ENCODE measurements at regions of chr12 and their contacts with region 1.

Region 1: GRCh38 chr12:15856097-15856982 is 25.8 kb upstream of the STRAP start:
- DNase-seq: peak; percentile 63
- ATAC-seq: peak; percentile 62
- H3K4me3 ChIP-seq: no peak overlapping the region
- H3K27ac ChIP-seq: no peak overlapping the region
- H3K4me1 ChIP-seq: peaks cover 12% of the 10 kb centered on the region
- H3K27me3 ChIP-seq: no peaks in the 10 kb centered on the region
- CTCF ChIP-seq: peak; percentile 76
- EP300 ChIP-seq: no peak
- POLR2A ChIP-seq: no peak
- RAD21 ChIP-seq: peak; percentile 74

Region 2: GRCh38 chr12:15276088-15276698 is 580.1 kb before region 1 on chr12:
- CTCF ChIA-PET with region 1: interaction called, 6 read pairs
- POLR2A ChIA-PET with region 1: no interaction called
- in situ Hi-C with region 1: loop called (anchors 10 kb)
- intact Hi-C with region 1: loop called (anchors 2 kb)
- DNase-seq: peak; percentile 11
- ATAC-seq: peak; percentile 79
- H3K4me3 ChIP-seq: no peak overlapping the region
- H3K27ac ChIP-seq: no peak overlapping the region
- H3K4me1 ChIP-seq: no peaks in the 10 kb centered on the region
- H3K27me3 ChIP-seq: no peaks in the 10 kb centered on the region; a peak in 1 of 5 replicates
- CTCF ChIP-seq: peak; percentile 78
- EP300 ChIP-seq: no peak
- POLR2A ChIP-seq: no peak
- RAD21 ChIP-seq: no peak; the same call in 1 of the 2 replicates

Region 3: GRCh38 chr12:15584366-15585041 is 271.8 kb before region 1 on chr12:
- CTCF ChIA-PET with region 1: interaction called, 84 read pairs
- POLR2A ChIA-PET with region 1: no interaction called
- in situ Hi-C with region 1: loop called (anchors 5 kb)
- intact Hi-C with region 1: no loop called
- DNase-seq: peak; percentile 37
- ATAC-seq: no peak
- H3K4me3 ChIP-seq: no peak overlapping the region
- H3K27ac ChIP-seq: no peak overlapping the region
- H3K4me1 ChIP-seq: peaks cover 18% of the 10 kb centered on the region
- H3K27me3 ChIP-seq: no peaks in the 10 kb centered on the region; a peak in 1 of 5 replicates
- CTCF ChIP-seq: peak; percentile 64
- EP300 ChIP-seq: no peak
- POLR2A ChIP-seq: no peak
- RAD21 ChIP-seq: peak; percentile 24; the same call in 1 of the 2 replicates

Region 4: DNA sequence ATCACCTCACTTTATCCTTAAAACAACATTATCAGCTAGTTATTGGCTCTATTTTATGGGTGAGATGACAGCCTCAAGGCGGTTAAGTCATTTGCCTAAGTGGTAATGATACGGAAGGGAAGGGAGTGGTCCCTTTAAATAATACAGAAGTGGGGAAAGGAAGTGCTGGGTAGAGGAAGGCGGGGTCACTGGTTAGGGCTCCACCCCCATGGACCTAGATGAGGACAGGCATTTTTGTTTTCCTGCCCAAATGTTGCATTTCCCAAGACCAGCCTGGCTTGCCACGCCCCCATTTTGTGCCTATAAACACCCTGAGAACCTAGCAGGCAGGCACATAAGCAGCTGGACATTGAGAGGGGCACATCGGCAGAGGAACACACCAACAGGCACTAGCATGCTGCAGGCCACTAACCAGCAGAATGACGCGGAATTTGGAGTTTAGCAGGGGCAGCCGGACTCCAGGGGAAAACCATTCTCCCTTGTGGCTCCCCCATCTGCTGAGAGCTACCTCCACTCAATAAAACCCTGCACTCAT is 168.1 kb before region 1 on chr12:
- CTCF ChIA-PET with region 1: no interaction called
- POLR2A ChIA-PET with region 1: no interaction called
- in situ Hi-C with region 1: no loop called
- intact Hi-C with region 1: loop called (anchors 10 kb)
- DNase-seq: no peak
- ATAC-seq: no peak
- H3K4me3 ChIP-seq: no peak overlapping the region
- H3K27ac ChIP-seq: no peak overlapping the region
- H3K4me1 ChIP-seq: peaks cover 66% of the 10 kb centered on the region
- H3K27me3 ChIP-seq: no peaks in the 10 kb centered on the region; a peak in 1 of 5 replicates
- CTCF ChIP-seq: no peak
- EP300 ChIP-seq: no peak
- POLR2A ChIP-seq: no peak
- RAD21 ChIP-seq: no peak

Region 5: DNA sequence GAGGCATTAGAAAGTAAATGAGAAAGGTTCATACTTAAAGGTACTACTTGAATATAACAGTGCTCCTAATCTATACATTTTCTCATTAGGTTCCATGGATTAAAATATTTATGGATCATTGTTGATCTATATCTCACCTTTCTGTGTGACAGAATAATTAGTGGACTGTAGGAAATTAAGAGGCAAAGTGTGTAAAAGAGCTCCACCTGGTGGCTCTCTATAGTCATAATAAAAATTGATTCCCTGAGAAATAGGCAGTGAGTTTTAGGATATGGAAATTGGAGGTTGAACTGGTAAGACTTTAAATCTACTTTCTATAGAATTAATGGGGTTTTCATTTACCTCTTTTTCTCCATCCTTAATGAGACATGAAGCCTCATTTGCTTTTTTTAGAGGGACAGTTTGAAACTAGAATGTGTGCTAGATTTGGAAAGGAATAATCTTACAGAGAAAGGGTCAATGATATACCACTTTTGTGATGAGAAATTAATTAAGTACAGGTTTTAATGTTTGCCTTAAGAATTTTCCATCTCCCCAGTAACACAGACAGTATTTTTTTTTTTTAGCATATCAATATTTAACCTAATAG is 43.0 kb after region 1 on chr12:
- CTCF ChIA-PET with region 1: interaction called, 6 read pairs
- POLR2A ChIA-PET with region 1: no interaction called
- in situ Hi-C with region 1: no loop called
- intact Hi-C with region 1: loop called (anchors 2 kb)
- DNase-seq: peak; percentile 30
- ATAC-seq: peak; percentile 50; the same call in 1 of the 3 replicates
- H3K4me3 ChIP-seq: no peak overlapping the region
- H3K27ac ChIP-seq: no peak overlapping the region
- H3K4me1 ChIP-seq: no peaks in the 10 kb centered on the region
- H3K27me3 ChIP-seq: no peaks in the 10 kb centered on the region
- CTCF ChIP-seq: peak; percentile 59
- EP300 ChIP-seq: no peak
- POLR2A ChIP-seq: no peak
- RAD21 ChIP-seq: no peak